ENCODE measurements at regions of chr11 and their contacts with region 1.

Region 1: DNA sequence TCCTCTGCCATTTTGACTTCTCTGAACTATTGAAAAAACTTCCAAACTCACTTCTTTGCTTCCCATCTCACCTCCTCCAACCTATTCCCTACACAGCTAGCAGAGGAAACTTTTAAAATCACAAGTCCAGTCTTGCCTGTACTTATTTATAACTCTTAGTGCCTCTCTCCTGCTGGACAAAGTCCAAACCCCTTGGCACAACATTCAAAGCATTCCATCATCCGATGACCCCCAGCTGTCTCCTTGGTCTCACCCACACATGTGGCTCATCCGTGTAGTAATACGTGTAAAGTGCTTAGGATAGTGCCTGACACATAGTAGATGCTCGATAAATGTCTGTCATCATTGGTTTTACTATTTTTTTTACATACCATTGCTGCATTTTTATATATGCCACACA is 101.4 kb downstream of the PARVA start:
- DNase-seq: no peak
- ATAC-seq: peak; percentile 50

Region 2: DNA sequence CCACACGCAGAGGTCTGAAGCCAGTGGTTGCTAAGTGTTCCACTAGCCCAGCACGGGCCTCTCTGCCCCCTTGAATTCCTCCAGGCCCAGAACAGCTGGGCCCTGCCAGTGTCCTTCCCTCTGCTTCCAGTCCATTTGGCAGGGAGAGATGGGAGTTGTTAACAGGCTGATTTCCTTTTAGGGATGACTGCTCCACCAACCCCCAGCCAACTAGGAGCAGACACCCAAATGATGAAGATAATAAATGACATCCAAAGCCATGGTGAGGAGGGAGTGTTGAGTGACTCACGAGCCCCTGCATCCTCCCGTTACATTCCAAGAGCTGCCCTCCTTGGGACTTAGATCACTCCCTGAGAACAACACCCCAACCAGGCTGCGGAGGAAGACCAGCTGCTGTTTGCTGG is 80.8 kb before region 1 on chr11:
- intact Hi-C with region 1: no loop called
- DNase-seq: peak; percentile 73
- ATAC-seq: peak; percentile 91

Region 3: DNA sequence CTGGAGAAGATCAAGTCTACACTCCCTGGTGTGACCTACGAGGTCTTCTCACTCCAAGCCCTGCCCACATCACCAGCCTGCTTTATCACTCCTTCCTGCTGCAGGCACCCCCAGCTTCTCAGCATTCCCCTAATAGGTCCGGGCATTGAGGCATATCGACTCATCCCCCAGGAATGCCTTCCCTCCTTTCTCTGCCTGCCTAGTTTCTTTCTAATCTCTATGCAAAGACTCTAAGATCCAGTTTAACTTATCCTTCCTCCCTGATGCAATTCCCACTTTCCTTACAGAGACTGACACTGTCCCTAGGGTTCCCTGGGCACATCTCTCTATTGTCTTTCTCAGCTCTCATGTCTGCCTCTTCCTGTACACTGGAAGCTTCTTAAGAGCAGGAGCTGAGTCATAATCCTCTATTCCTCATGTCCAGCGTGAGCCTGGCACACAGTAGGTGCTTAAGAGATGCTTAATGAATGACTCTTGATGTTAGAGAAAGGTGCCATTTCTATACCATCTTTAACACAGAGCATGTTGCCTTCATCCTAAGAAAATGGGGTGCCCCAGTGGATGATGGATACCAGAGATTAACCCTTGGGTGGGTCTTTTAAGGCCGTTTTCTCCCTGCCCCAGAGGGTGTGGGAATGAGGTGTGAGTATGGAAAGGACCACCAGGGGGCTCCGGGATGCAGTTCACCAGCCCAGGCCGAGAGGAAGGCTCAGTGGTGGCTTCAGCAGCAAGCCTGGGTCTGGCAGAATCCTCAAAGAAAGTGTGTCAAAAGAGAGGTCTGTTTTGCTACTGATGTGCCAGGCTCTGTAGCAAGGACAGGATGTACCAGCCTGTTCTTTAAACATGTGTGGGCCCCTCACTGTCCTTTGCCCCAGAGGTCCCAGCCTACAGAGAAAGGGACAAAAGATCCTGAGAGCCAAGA is 66.7 kb before region 1 on chr11:
- intact Hi-C with region 1: loop called (anchors 10 kb)
- DNase-seq: peak; percentile 68
- ATAC-seq: peak; percentile 83

Region 4: GRCh38 chr11:12599408-12600143 is 120.8 kb after region 1 on chr11:
- intact Hi-C with region 1: no loop called
- DNase-seq: peak; percentile 64
- ATAC-seq: peak; percentile 85